ENCODE measurements at regions of chr3 and their contacts with region 1.

Region 1: GRCh38 chr3:12807066-12807465 is 10.6 kb downstream of the CAND2 start:
- DNase-seq: no peak

Region 2: GRCh38 chr3:12796171-12797123 is 10.6 kb before region 1 on chr3 and contains the start of gene CAND2:
- CTCF ChIA-PET with region 1: interaction called, 3 read pairs
- POLR2A ChIA-PET with region 1: interaction called, 12 read pairs
- DNase-seq: peak; percentile 74

Measured in HEK293T (cell line).